H1 (cell line): ENCODE measurements at regions of chr1 and their contacts with region 1.

Region 1: GRCh38 chr1:93447516-93448291 is at the start of gene FNBP1L:
- DNase-seq: peak in 1 of 2 experiments; percentile 93
- H3K4me3 ChIP-seq: peak within 1 kb of the TSS; percentile 79 to 95 (median 94)
- H3K27ac ChIP-seq: peak within 1 kb of the TSS; percentile 95
- H3K4me1 ChIP-seq: peaks cover 0 to 13% (median 0%) of the 10 kb centered on the region in 4 experiments; a peak in 4 of 7 replicates
- H3K27me3 ChIP-seq: no peaks in the 10 kb centered on the region
- CTCF ChIP-seq: no peak
- EP300 ChIP-seq: no peak
- POLR2A ChIP-seq: peak; percentile 74 to 75; a peak in 1 of 3 replicates
- RAD21 ChIP-seq: 0 out of 4 replicates have a peak, but pooled peaks of 1 of the 2 experiments have one; percentile 1
- total RNA-seq, gene FNBP1L: 94.2 and 95.9 TPM in 2 replicates

Region 2: DNA sequence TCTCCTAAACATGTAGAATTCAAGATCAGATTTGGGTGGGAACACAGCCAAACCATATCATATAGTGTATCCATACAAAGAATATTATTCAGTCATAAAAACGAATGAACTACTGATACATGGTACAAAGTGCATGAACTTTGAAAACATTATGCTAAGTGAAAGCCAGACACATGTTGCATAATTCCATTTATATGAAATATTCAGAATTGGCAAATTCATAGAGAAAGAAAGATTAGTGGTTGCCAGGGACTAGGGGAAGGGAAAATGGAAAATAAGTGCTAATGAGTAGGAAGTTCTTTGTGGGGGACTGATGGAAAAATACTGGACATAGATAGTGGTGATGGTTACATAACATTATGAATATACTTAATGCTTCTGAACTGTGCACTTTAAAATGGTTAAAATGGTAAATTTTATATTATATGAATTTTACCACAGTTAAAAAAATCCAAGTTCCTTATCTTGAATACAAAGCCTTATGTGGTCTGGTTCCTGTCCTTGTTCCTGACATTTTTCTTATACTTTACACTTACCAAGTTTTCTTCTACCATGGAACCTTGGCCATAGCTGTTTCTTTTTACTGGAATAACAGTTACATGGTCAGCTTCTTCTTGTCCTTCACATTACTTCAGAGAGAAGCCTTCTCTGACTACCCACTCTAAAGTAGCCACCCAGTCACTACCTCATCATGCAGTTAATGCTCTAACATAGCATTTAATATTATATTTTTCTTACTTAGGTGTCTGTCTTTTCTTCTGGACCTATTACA is 203.2 kb before region 1 on chr1:
- CTCF ChIA-PET with region 1: no interaction called
- POLR2A ChIA-PET with region 1: no interaction called
- DNase-seq: no peak
- H3K4me3 ChIP-seq: no peak overlapping the region
- H3K27ac ChIP-seq: no peak overlapping the region
- H3K4me1 ChIP-seq: no peaks in the 10 kb centered on the region
- H3K27me3 ChIP-seq: no peaks in the 10 kb centered on the region
- CTCF ChIP-seq: no peak
- EP300 ChIP-seq: no peak
- POLR2A ChIP-seq: no peak
- RAD21 ChIP-seq: no peak

Region 3: GRCh38 chr1:93433407-93433961 is 14.2 kb before region 1 on chr1:
- CTCF ChIA-PET with region 1: interaction called, 6 read pairs
- POLR2A ChIA-PET with region 1: interaction called, 12 read pairs
- DNase-seq: peak in 1 of 2 experiments; percentile 50
- H3K4me3 ChIP-seq: no peak overlapping the region
- H3K27ac ChIP-seq: no peak overlapping the region
- H3K4me1 ChIP-seq: no peaks in the 10 kb centered on the region; a peak in 1 of 7 replicates
- H3K27me3 ChIP-seq: no peaks in the 10 kb centered on the region; a peak in 1 of 7 replicates
- CTCF ChIP-seq: peak; percentile 15 to 53 (median 51); a peak in 3 of 4 replicates
- EP300 ChIP-seq: no peak
- POLR2A ChIP-seq: no peak
- RAD21 ChIP-seq: peak in 1 of 2 experiments; percentile 38; a peak in 2 of 4 replicates

Region 4: GRCh38 chr1:93615582-93616150 is 168.0 kb after region 1 on chr1:
- CTCF ChIA-PET with region 1: no interaction called
- POLR2A ChIA-PET with region 1: interaction called, 12 read pairs
- DNase-seq: no peak
- H3K4me3 ChIP-seq: peak overlapping the region in 1 of 4 experiments; percentile 11; a peak in 2 of 8 replicates
- H3K27ac ChIP-seq: 0 out of 2 replicates have a peak overlapping the region, but pooled peaks have one; percentile 13
- H3K4me1 ChIP-seq: peaks cover 19 to 36% (median 25%) of the 10 kb centered on the region in 4 experiments
- H3K27me3 ChIP-seq: no peaks in the 10 kb centered on the region
- CTCF ChIP-seq: no peak
- EP300 ChIP-seq: no peak
- POLR2A ChIP-seq: no peak
- RAD21 ChIP-seq: no peak